ENCODE measurements at regions of chr17 and their contacts with region 1.

Region 1: DNA sequence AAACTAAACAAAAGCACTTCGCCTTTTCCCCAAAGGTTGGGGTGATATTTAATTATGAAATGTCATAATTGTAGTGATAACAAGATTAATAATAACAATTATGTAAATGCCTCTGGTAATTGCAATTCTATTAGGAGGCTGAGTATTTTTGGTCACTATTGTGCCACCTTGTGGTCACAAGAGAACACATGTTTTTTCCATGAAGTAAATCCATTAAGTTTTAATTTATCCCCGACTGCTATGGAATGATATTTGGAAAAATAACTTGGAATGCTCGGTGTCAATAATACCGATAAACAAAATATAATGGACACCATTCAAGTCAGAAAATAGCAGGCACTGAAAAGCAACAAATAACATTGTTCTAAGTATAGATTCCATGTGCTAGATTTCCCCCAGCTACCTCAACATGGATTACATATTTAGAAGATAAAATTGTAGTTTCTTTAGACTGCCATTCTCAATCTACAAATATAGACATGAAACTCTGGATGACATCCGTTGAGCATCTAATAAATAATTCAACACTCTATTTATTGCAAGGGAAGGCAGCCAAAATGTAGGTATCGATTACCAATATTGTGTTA is 25.0 kb upstream of the KCNJ2 start:
- DNase-seq: peak; percentile 76
- H3K4me3 ChIP-seq: no peak overlapping the region
- H3K27ac ChIP-seq: no peak overlapping the region
- H3K4me1 ChIP-seq: peaks cover 2% of the 10 kb centered on the region
- H3K27me3 ChIP-seq: no peaks in the 10 kb centered on the region
- CTCF ChIP-seq: peak; percentile 5 to 16
- POLR2A ChIP-seq: no peak

Region 2: DNA sequence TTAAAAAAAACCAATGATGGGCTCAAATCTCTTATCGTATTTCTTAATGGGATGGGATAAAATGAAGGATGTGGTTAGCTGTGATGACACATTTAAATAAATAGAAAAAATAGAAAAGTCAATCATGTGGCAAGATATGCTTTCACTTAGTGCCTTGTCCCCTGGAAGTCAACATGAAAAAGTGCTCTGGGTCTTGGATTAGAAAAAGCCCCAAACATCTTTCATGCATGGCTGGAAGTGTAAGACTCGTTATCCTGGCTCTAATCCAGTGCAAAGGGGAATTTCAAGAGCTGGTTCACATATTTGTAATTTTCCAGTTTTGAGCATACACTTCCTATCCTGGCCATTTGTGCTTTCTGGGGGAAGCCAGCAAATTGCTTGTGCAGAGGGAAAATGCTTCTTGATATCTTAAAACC is 569.0 kb before region 1 on chr17:
- CTCF ChIA-PET with region 1: interaction called, 32 read pairs
- POLR2A ChIA-PET with region 1: no interaction called
- dilution Hi-C with region 1: no loop called
- intact Hi-C with region 1: no loop called
- DNase-seq: peak; percentile 82
- H3K4me3 ChIP-seq: no peak overlapping the region
- H3K27ac ChIP-seq: no peak overlapping the region
- H3K4me1 ChIP-seq: peaks cover 18% of the 10 kb centered on the region
- H3K27me3 ChIP-seq: peaks cover 5 to 12% of the 10 kb centered on the region in 2 experiments
- CTCF ChIP-seq: no peak
- POLR2A ChIP-seq: no peak

Region 3: DNA sequence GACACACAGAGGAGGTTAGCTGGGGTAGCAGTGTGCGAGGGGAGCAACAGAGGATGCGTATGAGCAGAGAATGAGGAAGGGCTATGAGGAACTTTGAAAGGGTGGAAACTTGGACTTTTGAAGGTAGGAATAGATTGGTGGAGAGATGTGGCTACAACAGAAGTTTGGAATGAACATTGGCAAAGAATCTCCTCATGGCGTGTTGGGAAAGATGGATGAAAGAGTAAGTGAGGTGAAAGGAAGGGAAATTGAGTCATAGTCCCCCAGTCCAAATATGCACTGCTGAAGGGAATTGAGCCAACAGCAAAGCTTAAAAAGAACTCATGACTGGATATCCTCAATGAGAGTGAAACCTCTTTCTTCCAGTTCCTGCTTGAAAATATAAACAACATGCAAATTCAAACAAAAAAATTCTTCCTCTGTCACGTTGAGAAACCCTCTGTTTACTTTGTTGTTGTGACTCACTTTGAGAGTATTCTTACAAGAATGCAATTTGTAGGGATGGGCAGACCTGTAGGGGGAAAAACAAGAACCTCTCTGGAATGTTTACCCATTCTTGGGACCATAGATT is 382.5 kb before region 1 on chr17:
- CTCF ChIA-PET with region 1: no interaction called
- POLR2A ChIA-PET with region 1: no interaction called
- dilution Hi-C with region 1: no loop called
- intact Hi-C with region 1: loop called (anchors 1 kb)
- DNase-seq: peak; percentile 86
- H3K4me3 ChIP-seq: no peak overlapping the region
- H3K27ac ChIP-seq: peak overlapping the region; percentile 91
- H3K4me1 ChIP-seq: peaks cover 21% of the 10 kb centered on the region
- H3K27me3 ChIP-seq: no peaks in the 10 kb centered on the region
- CTCF ChIP-seq: no peak
- POLR2A ChIP-seq: no peak

Region 4: GRCh38 chr17:70053241-70054234 is 90.8 kb before region 1 on chr17:
- CTCF ChIA-PET with region 1: interaction called, 13 read pairs
- POLR2A ChIA-PET with region 1: no interaction called
- dilution Hi-C with region 1: no loop called
- intact Hi-C with region 1: no loop called
- DNase-seq: peak; percentile 68
- H3K4me3 ChIP-seq: peak overlapping the region; percentile 3 to 41 (median 30)
- H3K27ac ChIP-seq: peak overlapping the region; percentile 58
- H3K4me1 ChIP-seq: peaks cover 6% of the 10 kb centered on the region
- H3K27me3 ChIP-seq: no peaks in the 10 kb centered on the region
- CTCF ChIP-seq: no peak
- POLR2A ChIP-seq: no peak

Region 5: GRCh38 chr17:70158180-70158579 is 13.8 kb after region 1 on chr17:
- CTCF ChIA-PET with region 1: interaction called, 10 read pairs
- POLR2A ChIA-PET with region 1: no interaction called
- dilution Hi-C with region 1: no loop called
- intact Hi-C with region 1: no loop called
- DNase-seq: peak; percentile 97
- H3K4me3 ChIP-seq: peak overlapping the region; percentile 27 to 77 (median 47)
- H3K27ac ChIP-seq: peak overlapping the region; percentile 100
- H3K4me1 ChIP-seq: peaks cover 44% of the 10 kb centered on the region
- H3K27me3 ChIP-seq: no peaks in the 10 kb centered on the region
- CTCF ChIP-seq: no peak
- POLR2A ChIP-seq: no peak

Region 6: DNA sequence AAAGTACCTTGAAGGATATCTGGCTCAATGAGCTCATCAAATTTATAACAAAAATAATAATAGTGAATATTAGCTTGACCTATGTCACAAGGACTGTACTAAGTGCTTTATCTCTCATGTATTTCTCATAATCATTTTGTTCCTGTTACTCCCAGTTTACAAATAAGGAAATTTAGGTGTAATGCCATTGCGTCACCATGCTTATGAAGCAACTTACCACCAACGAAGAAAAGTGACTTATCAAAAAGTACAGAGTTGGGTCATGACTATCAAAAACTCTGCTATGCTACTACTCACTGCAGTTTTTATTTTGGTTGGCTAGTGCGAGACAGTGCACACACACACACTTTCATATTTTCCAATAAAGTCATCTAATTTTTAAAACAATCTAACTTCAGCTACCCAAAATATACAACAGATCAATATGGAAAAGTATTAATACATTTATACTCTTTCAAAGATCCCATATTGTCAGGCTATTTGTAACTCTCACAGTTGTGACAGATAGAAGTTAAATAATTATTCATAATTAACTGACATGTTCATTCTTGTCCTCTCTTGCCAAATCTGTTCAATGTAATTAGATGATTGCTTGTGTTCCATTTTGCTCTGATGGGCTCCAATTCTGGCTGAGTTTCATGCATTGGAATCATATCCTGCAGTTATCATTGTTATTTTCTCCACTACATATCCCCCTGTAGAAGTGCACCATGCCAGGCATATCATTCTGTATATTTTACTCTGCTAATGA is 144.4 kb after region 1 on chr17:
- CTCF ChIA-PET with region 1: no interaction called
- POLR2A ChIA-PET with region 1: no interaction called
- dilution Hi-C with region 1: no loop called
- intact Hi-C with region 1: no loop called
- DNase-seq: no peak
- H3K4me3 ChIP-seq: no peak overlapping the region
- H3K27ac ChIP-seq: no peak overlapping the region
- H3K4me1 ChIP-seq: peaks cover 7% of the 10 kb centered on the region
- H3K27me3 ChIP-seq: no peaks in the 10 kb centered on the region
- CTCF ChIP-seq: no peak
- POLR2A ChIP-seq: no peak